A549 (cell line): ENCODE measurements at regions of chr5 and their contacts with region 1.

Region 1: GRCh38 chr5:142171270-142171669 is 62.7 kb downstream of the NDFIP1 start:
- DNase-seq: no peak
- ATAC-seq: no peak
- H3K4me3 ChIP-seq: no peak overlapping the region
- H3K27ac ChIP-seq: no peak overlapping the region
- H3K4me1 ChIP-seq: no peaks in the 10 kb centered on the region
- CTCF ChIP-seq: no peak
- EP300 ChIP-seq: no peak
- POLR2A ChIP-seq: no peak
- RAD21 ChIP-seq: no peak

Region 2: GRCh38 chr5:142046191-142046590 is 125.1 kb before region 1 on chr5:
- CTCF ChIA-PET with region 1: no interaction called
- POLR2A ChIA-PET with region 1: no interaction called
- DNase-seq: no peak
- ATAC-seq: no peak
- H3K4me3 ChIP-seq: no peak overlapping the region
- H3K27ac ChIP-seq: no peak overlapping the region
- H3K4me1 ChIP-seq: no peaks in the 10 kb centered on the region
- CTCF ChIP-seq: no peak
- EP300 ChIP-seq: no peak
- POLR2A ChIP-seq: no peak
- RAD21 ChIP-seq: no peak

Region 3: DNA sequence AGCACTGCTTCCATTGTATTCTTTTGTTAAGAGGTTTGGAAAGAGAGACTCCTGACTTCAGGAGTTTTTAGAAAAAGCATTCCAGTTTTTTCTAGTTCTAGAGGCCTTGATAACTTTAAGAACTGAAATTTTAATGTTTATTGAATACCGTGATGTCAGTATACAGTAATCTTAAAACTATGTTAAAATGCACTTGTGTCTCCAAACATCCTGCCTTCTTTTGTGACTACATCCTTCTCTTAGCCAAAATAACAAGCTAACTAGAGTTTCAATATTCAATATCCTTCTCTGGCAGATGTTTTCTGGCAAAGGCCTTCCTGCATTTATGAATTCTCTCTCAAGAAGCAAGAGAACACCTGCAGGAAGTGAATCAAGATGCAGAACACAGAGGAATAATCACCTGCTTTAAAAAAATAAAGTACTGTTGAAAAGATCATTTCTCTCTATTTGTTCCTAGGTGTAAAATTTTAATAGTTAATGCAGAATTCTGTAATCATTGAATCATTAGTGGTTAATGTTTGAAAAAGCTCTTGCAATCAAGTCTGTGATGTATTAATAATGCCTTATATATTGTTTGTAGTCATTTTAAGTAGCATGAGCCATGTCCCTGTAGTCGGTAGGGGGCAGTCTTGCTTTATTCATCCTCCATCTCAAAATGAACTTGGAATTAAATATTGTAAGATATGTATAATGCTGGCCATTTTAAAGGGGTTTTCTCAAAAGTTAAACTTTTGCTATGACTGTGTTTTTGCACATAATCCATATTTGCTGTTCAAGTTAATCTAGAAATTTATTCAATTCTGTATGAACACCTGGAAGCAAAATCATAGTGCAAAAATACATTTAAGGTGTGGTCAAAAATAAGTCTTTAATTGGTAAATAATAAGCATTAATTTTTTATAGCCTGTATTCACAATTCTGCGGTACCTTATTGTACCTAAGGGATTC is 19.6 kb before region 1 on chr5:
- CTCF ChIA-PET with region 1: interaction called, 11 read pairs
- POLR2A ChIA-PET with region 1: no interaction called
- DNase-seq: peak; percentile 37 to 77
- ATAC-seq: peak; percentile 77 to 80; a peak in 5 of 6 replicates
- H3K4me3 ChIP-seq: no peak overlapping the region
- H3K27ac ChIP-seq: no peak overlapping the region
- H3K4me1 ChIP-seq: no peaks in the 10 kb centered on the region
- CTCF ChIP-seq: peak; percentile 93
- EP300 ChIP-seq: no peak
- POLR2A ChIP-seq: no peak
- RAD21 ChIP-seq: peak; percentile 92

Region 4: DNA sequence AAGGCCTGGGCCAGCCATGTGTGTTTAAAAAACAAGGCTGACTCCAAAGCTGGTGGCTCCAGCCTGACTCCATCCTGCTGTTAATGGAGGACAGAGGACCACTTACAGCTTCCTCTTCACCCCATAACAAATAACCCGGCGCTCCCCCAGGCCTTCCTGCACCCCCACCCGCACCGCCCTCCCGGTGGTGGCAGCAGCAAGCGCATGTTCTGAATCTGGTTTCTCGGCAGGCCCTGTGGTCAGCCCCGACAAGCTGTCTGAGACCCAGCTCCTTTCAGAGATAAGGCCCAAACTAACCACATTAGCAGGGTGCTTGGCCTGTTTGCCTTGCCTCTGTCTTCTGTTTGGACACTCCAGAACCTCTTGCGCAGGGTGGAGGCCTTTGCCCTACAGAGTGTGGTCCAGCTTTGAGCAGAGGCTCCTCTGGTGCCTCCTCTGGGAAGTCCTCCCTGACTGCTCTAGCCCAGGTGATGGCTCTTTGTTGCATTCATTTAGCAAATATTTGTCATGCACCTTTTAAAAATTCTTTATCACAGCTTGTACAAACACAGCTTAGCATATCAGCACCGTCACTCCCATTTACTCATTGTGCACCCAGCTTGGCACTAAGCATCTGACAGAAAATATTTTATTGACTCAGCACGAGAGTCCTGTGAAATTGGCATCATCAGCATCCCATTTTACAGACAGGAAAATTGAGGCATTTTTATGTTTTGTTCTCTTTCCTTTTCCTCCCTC is 15.8 kb after region 1 on chr5:
- CTCF ChIA-PET with region 1: interaction called, 16 read pairs
- POLR2A ChIA-PET with region 1: no interaction called
- DNase-seq: peak in 1 of 2 experiments; percentile 7
- ATAC-seq: peak in 1 of 2 experiments; percentile 30; a peak in 3 of 6 replicates
- H3K4me3 ChIP-seq: no peak overlapping the region
- H3K27ac ChIP-seq: no peak overlapping the region
- H3K4me1 ChIP-seq: no peaks in the 10 kb centered on the region
- CTCF ChIP-seq: no peak
- EP300 ChIP-seq: no peak
- POLR2A ChIP-seq: no peak
- RAD21 ChIP-seq: no peak

Region 5: DNA sequence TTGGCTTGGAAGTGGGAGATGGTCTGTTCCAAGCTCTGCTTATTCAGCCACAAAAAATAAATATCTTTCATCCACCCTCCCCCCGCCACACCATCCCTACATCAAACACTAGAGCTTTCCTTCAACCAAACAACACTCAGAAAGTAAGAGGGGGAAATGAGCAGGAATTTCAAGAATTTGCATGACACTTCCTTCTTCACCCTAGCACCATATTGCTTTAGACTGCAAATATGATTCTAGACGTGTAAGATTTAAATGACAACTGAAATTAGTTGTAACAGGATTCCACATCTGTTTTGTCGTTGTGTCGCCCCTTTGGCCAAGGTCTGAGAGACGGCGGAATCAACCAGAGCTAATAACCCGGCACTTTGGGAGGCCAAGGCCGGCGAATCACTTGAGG is 25.8 kb after region 1 on chr5:
- CTCF ChIA-PET with region 1: no interaction called
- POLR2A ChIA-PET with region 1: no interaction called
- DNase-seq: no peak
- ATAC-seq: no peak
- H3K4me3 ChIP-seq: no peak overlapping the region
- H3K27ac ChIP-seq: no peak overlapping the region
- H3K4me1 ChIP-seq: no peaks in the 10 kb centered on the region
- CTCF ChIP-seq: no peak
- EP300 ChIP-seq: no peak
- POLR2A ChIP-seq: no peak
- RAD21 ChIP-seq: no peak

Region 6: DNA sequence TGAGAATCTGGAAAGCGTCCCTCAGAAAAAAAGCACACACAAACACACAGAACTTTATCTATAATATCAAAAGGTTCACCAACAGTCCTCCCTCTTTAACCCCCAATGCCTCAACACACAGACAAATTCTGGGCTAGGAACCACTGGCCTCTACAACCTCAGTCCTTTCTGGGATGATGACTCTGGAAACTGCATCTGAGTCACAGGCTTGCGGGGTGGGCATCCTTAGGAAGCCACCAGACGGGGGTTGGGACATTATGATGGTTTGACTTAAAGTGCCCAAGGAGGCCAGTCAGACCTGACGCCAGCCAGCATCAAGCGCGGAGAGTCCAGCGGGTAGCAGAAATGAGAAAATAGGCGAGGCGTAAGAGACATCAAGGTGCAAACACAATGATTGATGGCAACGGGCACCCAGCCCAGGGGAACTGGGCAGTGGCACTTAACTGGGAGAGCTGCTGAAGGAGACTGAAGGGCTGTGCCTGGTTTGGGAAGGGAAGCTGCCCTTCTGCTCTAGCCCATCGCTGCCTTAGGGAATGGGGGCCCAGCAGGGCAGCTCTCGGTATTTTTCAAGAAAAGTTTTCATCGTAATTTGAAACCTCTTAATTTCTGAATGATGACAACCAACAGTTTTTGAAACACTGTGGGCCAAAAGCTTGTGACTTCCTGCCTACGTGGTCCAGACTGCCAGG is 132.9 kb after region 1 on chr5:
- CTCF ChIA-PET with region 1: no interaction called
- POLR2A ChIA-PET with region 1: no interaction called
- DNase-seq: no peak
- ATAC-seq: no peak
- H3K4me3 ChIP-seq: no peak overlapping the region
- H3K27ac ChIP-seq: no peak overlapping the region
- H3K4me1 ChIP-seq: no peaks in the 10 kb centered on the region
- CTCF ChIP-seq: no peak
- EP300 ChIP-seq: no peak
- POLR2A ChIP-seq: no peak
- RAD21 ChIP-seq: no peak